ENCODE measurements at regions of chr20 and their contacts with region 1.

Region 1: DNA sequence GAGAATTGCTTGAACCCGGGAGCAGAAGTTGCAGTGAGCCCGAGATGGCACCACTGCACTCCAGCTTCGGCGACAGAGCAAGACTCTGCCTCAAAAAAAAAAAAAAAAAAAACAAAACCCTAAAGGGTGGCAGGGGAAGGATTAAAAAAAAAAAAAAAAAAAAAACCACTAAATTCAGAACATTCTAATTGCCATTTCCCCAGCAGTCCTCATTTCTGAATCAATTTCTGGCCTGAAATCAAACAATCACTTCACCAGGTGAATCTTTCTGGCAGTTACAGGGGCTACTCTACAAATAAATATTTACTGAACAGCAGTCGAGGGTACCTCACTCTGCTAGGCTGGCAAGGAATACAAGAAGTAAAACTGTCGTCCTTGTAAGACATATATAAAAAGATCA is 1.2 kb downstream of the UQCC1 start:
- DNase-seq: no peak
- ATAC-seq: no peak
- H3K4me3 ChIP-seq: no peak overlapping the region
- H3K4me3 Mint-ChIP-seq: peak overlapping the region; percentile 99
- H3K27ac ChIP-seq: no peak overlapping the region
- H3K27ac Mint-ChIP-seq: peak overlapping the region; percentile 99
- H3K4me1 ChIP-seq: peaks cover 9 to 15% of the 10 kb centered on the region in 2 donors
- H3K4me1 Mint-ChIP-seq: peaks cover 24% of the 10 kb centered on the region
- H3K27me3 ChIP-seq: no peaks in the 10 kb centered on the region
- H3K27me3 Mint-ChIP-seq: peaks cover 4% of the 10 kb centered on the region
- CTCF ChIP-seq: no peak

Region 2: DNA sequence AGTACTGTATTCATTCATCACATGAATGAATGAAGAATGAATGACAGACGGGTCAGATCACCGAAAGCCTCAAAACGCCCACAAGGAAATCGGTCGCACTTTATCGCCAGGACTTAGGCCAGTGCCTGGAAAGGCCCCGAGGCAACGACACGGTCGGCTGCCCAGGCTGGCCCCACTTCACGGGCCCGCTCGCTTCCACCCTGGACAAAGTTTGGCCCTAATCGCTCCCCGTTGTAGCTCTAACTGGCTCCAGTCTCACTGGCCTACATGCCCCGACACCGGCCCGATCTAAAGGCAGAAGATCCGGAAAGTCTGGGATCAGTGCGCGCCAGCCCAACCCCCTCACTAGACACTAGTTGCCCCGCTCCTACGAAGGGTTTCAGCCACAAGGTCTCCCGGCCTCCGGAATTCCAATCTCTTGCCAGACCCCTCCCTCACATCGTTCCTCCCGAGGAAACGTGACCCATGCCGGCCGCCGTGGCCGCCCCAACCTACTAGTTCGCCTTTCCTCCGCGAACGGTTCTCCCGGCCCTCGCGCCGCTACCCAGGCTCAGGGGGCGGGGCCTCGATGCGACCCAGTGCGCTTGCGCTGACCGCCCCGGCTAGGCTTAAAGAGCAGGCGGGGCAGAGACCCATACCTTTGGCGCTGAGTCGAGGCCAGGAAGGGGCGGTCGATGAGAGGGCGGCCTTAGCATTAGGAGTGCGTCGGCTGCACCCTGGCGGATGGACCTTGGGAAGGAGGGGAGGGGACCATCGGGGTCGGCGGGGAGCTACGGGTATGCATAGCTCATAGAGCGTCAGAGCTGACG is 455.2 kb before region 1 on chr20 and contains the starts of genes GSS and MYH7B:
- CTCF ChIA-PET with region 1: no interaction called
- POLR2A ChIA-PET with region 1: no interaction called
- intact Hi-C with region 1: no loop called
- DNase-seq: peak; percentile 95
- ATAC-seq: peak; percentile 93
- H3K4me3 ChIP-seq: peak within 1 kb of the TSS; percentile 58 to 88 (median 73)
- H3K4me3 Mint-ChIP-seq: peak within 1 kb of the TSS; percentile 97
- H3K27ac ChIP-seq: peak within 1 kb of the TSS; percentile 42 to 79
- H3K27ac Mint-ChIP-seq: peak within 1 kb of the TSS; percentile 93
- H3K4me1 ChIP-seq: peaks cover 5 to 16% of the 10 kb centered on the region in 2 donors
- H3K4me1 Mint-ChIP-seq: peaks cover 25% of the 10 kb centered on the region
- H3K27me3 ChIP-seq: no peaks in the 10 kb centered on the region
- H3K27me3 Mint-ChIP-seq: no peaks in the 10 kb centered on the region
- CTCF ChIP-seq: no peak
- total RNA-seq, gene GSS: 22.0 and 22.5 TPM in 2 replicates
- total RNA-seq, gene MYH7B: 0.66 and 0.79 TPM in 2 replicates

Region 3: GRCh38 chr20:35146920-35147574 is 263.6 kb before region 1 on chr20 and contains the start of gene EDEM2:
- CTCF ChIA-PET with region 1: no interaction called
- POLR2A ChIA-PET with region 1: no interaction called
- intact Hi-C with region 1: loop called (anchors 5 kb)
- DNase-seq: peak; percentile 95
- ATAC-seq: peak; percentile 80
- H3K4me3 ChIP-seq: peak within 1 kb of the TSS; percentile 69 to 94 (median 90)
- H3K4me3 Mint-ChIP-seq: peak within 1 kb of the TSS; percentile 96
- H3K27ac ChIP-seq: peak within 1 kb of the TSS; percentile 79 to 89
- H3K27ac Mint-ChIP-seq: peak within 1 kb of the TSS; percentile 94
- H3K4me1 ChIP-seq: peaks cover 33 to 43% of the 10 kb centered on the region in 2 donors
- H3K4me1 Mint-ChIP-seq: peaks cover 36% of the 10 kb centered on the region
- H3K27me3 ChIP-seq: no peaks in the 10 kb centered on the region
- H3K27me3 Mint-ChIP-seq: no peaks in the 10 kb centered on the region
- CTCF ChIP-seq: no peak
- total RNA-seq, gene EDEM2: 28.1 and 28.6 TPM in 2 replicates

Region 4: GRCh38 chr20:35277531-35278395 is 132.8 kb before region 1 on chr20 and contains the start of gene MMP24OS:
- CTCF ChIA-PET with region 1: no interaction called
- POLR2A ChIA-PET with region 1: interaction called, 3 read pairs
- intact Hi-C with region 1: loop called (anchors 2 kb)
- DNase-seq: peak; percentile 95
- ATAC-seq: peak; percentile 90
- H3K4me3 ChIP-seq: peak within 1 kb of the TSS; percentile 70 to 86 (median 77)
- H3K4me3 Mint-ChIP-seq: peak within 1 kb of the TSS; percentile 94
- H3K27ac ChIP-seq: peak within 1 kb of the TSS; percentile 92 to 96
- H3K27ac Mint-ChIP-seq: peak within 1 kb of the TSS; percentile 99
- H3K4me1 ChIP-seq: peaks cover 14 to 21% of the 10 kb centered on the region in 2 donors
- H3K4me1 Mint-ChIP-seq: peaks cover 20% of the 10 kb centered on the region
- H3K27me3 ChIP-seq: no peaks in the 10 kb centered on the region
- H3K27me3 Mint-ChIP-seq: no peaks in the 10 kb centered on the region
- CTCF ChIP-seq: peak; percentile 22
- total RNA-seq, gene MMP24OS: 57.0 and 66.9 TPM in 2 replicates

Region 5: GRCh38 chr20:35284267-35284991 is 126.2 kb before region 1 on chr20 and contains the start of gene EIF6:
- CTCF ChIA-PET with region 1: no interaction called
- POLR2A ChIA-PET with region 1: no interaction called
- intact Hi-C with region 1: loop called (anchors 1 kb)
- DNase-seq: peak; percentile 83
- ATAC-seq: peak; percentile 92
- H3K4me3 ChIP-seq: peak within 1 kb of the TSS; percentile 59 to 97 (median 93)
- H3K4me3 Mint-ChIP-seq: peak within 1 kb of the TSS; percentile 95
- H3K27ac ChIP-seq: peak within 1 kb of the TSS; percentile 71 to 90
- H3K27ac Mint-ChIP-seq: peak within 1 kb of the TSS; percentile 96
- H3K4me1 ChIP-seq: peaks cover 13 to 19% of the 10 kb centered on the region in 2 donors
- H3K4me1 Mint-ChIP-seq: peaks cover 32% of the 10 kb centered on the region
- H3K27me3 ChIP-seq: no peaks in the 10 kb centered on the region
- H3K27me3 Mint-ChIP-seq: no peaks in the 10 kb centered on the region
- CTCF ChIP-seq: no peak
- total RNA-seq, gene EIF6: 74.0 and 81.2 TPM in 2 replicates

Region 6: GRCh38 chr20:36235892-36236785 is 825.5 kb after region 1 on chr20 and contains the start of gene AAR2:
- CTCF ChIA-PET with region 1: no interaction called
- POLR2A ChIA-PET with region 1: no interaction called
- intact Hi-C with region 1: loop called (anchors 5 kb)
- DNase-seq: peak; percentile 78
- ATAC-seq: peak; percentile 91
- H3K4me3 ChIP-seq: peak within 1 kb of the TSS; percentile 78 to 89 (median 88)
- H3K4me3 Mint-ChIP-seq: peak within 1 kb of the TSS; percentile 94
- H3K27ac ChIP-seq: peak within 1 kb of the TSS; percentile 54 to 91
- H3K27ac Mint-ChIP-seq: peak within 1 kb of the TSS; percentile 90
- H3K4me1 ChIP-seq: peaks cover 10 to 16% of the 10 kb centered on the region in 2 donors
- H3K4me1 Mint-ChIP-seq: peaks cover 35% of the 10 kb centered on the region
- H3K27me3 ChIP-seq: peaks cover 0 to 6% (median 0%) of the 10 kb centered on the region in 4 experiments
- H3K27me3 Mint-ChIP-seq: peaks cover 12% of the 10 kb centered on the region
- CTCF ChIP-seq: no peak
- total RNA-seq, gene AAR2: 21.3 and 22.0 TPM in 2 replicates

Measured in B cell (primary cell).